ENCODE measurements at regions of chr6 and their contacts with region 1.

Region 1: DNA sequence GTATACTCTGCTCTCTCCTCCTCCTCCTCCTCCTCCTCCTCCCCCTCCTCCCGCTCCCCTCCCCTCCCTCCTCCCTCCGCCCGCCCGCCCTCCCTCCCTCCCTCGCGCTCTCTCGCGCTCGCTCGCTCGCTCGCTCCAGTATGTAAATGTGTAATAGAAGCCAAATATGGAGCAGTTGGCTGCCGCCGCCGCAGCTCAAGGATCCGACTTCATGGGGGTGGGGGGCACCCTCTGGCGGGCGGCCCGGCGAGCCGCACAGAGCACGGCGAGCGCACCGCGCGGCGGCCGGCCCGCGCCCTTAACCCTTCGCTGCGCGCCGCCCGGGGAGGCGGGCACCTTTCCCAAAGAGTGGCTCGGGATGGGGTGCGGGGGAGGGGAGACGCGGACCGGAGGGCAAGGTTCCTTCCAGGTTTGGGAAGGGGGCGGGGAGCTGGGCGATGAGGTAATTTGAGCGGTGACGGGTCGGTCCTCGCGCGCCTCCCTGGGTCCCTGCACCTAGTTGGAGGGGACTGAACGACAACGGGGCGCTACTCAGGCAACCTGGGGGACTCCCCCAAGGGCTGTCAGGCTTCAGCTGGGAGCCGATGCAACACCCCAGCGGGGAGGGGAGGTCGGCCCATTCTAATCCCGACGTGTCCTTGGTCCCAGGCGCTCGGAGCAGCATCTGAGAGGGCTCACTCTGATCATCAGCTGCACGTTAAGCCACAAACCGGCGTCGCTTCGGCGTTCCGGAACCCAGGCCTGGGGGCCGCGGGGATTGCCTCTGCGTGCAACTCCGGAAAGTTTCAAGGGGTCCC is 409 bp upstream of the ATXN1 start:
- DNase-seq: peak; percentile 92
- ATAC-seq: peak; percentile 80
- H3K4me3 ChIP-seq: peak overlapping the region; percentile 92 to 98 (median 93)
- H3K27ac ChIP-seq: peak overlapping the region; percentile 87
- H3K4me1 ChIP-seq: peaks cover 45% of the 10 kb centered on the region
- H3K27me3 ChIP-seq: no peaks in the 10 kb centered on the region; a peak in 1 of 5 replicates
- CTCF ChIP-seq: peak; percentile 74
- EP300 ChIP-seq: peak; percentile 17 to 64; a peak in 3 of 4 replicates
- POLR2A ChIP-seq: peak in 1 of 2 experiments; percentile 60
- RAD21 ChIP-seq: peak; percentile 93

Region 2: DNA sequence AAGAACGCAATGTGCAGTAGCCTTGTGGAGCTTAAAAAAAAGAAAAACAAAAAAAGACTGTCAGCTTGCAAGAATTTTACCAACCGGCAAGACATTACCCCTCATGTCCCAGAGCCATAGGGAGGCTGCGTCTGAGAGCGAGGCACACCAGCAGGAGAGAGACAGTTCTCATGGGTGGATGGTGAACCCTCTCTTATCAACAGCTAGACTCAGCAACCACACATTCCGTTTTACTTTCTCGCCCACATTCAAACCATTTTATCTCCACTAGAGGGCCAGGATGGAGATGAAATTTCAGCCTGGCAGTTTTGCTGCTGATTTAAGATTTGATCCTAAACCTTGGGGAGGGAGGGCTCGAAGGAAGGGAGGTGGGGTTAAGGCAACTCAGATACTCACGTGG is 247.4 kb before region 1 on chr6:
- CTCF ChIA-PET with region 1: interaction called, 5 read pairs
- POLR2A ChIA-PET with region 1: interaction called, 3 read pairs
- in situ Hi-C with region 1: loop called (anchors 5 kb)
- intact Hi-C with region 1: loop called (anchors 1 kb)
- DNase-seq: peak; percentile 28
- ATAC-seq: peak; percentile 44
- H3K4me3 ChIP-seq: no peak overlapping the region
- H3K27ac ChIP-seq: no peak overlapping the region
- H3K4me1 ChIP-seq: peaks cover 20% of the 10 kb centered on the region
- H3K27me3 ChIP-seq: no peaks in the 10 kb centered on the region
- CTCF ChIP-seq: peak; percentile 43; the same call in 1 of the 2 replicates
- EP300 ChIP-seq: no peak
- POLR2A ChIP-seq: no peak
- RAD21 ChIP-seq: no peak

Region 3: GRCh38 chr6:16684896-16685554 is 76.6 kb before region 1 on chr6:
- CTCF ChIA-PET with region 1: no interaction called
- POLR2A ChIA-PET with region 1: interaction called, 14 read pairs
- in situ Hi-C with region 1: no loop called
- intact Hi-C with region 1: loop called (anchors 5 kb)
- DNase-seq: no peak
- ATAC-seq: no peak
- H3K4me3 ChIP-seq: no peak overlapping the region; a peak in 1 of 6 replicates
- H3K27ac ChIP-seq: peak overlapping the region; percentile 58
- H3K4me1 ChIP-seq: peaks cover 66% of the 10 kb centered on the region
- H3K27me3 ChIP-seq: no peaks in the 10 kb centered on the region
- CTCF ChIP-seq: no peak
- EP300 ChIP-seq: no peak
- POLR2A ChIP-seq: no peak
- RAD21 ChIP-seq: no peak

Region 4: DNA sequence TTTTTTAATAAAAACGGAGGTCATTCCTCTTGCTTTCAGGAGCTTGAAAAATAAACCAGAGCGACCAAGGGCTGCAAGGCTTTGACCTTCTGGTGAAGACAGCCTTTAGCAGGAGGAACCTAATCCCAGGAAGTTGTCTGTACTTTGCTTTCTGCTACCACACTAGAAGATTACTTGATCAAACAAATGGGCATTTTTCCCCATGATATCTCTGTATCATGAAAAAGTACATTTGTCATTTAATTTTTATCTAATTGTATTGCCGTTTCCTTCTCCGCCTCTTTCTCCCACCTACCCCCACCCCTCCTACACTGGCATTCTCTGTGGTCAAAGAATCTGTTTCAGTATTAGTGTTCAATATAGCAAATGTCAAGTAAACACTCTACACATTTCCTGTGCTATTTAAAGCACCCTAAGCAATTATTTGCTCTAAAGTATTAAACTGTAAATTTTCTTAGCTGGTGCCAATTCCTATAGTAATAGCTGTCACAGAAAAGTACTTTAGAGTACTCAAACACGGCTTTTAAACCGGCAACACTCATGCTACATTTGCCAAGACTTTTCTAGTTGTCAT is 30.1 kb before region 1 on chr6:
- CTCF ChIA-PET with region 1: no interaction called
- POLR2A ChIA-PET with region 1: interaction called, 17 read pairs
- in situ Hi-C with region 1: no loop called
- intact Hi-C with region 1: loop called (anchors 1 kb)
- DNase-seq: no peak
- ATAC-seq: no peak
- H3K4me3 ChIP-seq: no peak overlapping the region
- H3K27ac ChIP-seq: peak overlapping the region; percentile 56
- H3K4me1 ChIP-seq: peaks cover 98% of the 10 kb centered on the region
- H3K27me3 ChIP-seq: no peaks in the 10 kb centered on the region
- CTCF ChIP-seq: no peak
- EP300 ChIP-seq: no peak
- POLR2A ChIP-seq: no peak
- RAD21 ChIP-seq: no peak

Region 5: GRCh38 chr6:16964553-16965501 is 203.2 kb after region 1 on chr6:
- CTCF ChIA-PET with region 1: interaction called, 7 read pairs
- POLR2A ChIA-PET with region 1: no interaction called
- in situ Hi-C with region 1: loop called (anchors 5 kb)
- intact Hi-C with region 1: loop called (anchors 1 kb)
- DNase-seq: peak; percentile 67
- ATAC-seq: peak; percentile 99
- H3K4me3 ChIP-seq: peak overlapping the region in 1 of 3 experiments; percentile 32; a peak in 2 of 6 replicates
- H3K27ac ChIP-seq: no peak overlapping the region
- H3K4me1 ChIP-seq: peaks cover 6% of the 10 kb centered on the region
- H3K27me3 ChIP-seq: peaks cover 0 to 21% of the 10 kb centered on the region in 2 experiments; a peak in 2 of 5 replicates
- CTCF ChIP-seq: peak; percentile 97
- EP300 ChIP-seq: no peak
- POLR2A ChIP-seq: no peak
- RAD21 ChIP-seq: peak; percentile 88